HepG2 (cell line): ENCODE measurements at regions of chr13 and their contacts with region 1.

Region 1: GRCh38 chr13:46975173-46975572 is 78.3 kb upstream of the HTR2A start:
- DNase-seq: no peak
- ATAC-seq: no peak
- H3K4me3 ChIP-seq: no peak overlapping the region
- H3K27ac ChIP-seq: no peak overlapping the region
- H3K4me1 ChIP-seq: no peaks in the 10 kb centered on the region
- H3K27me3 ChIP-seq: no peaks in the 10 kb centered on the region
- CTCF ChIP-seq: no peak
- EP300 ChIP-seq: no peak
- POLR2A ChIP-seq: no peak
- RAD21 ChIP-seq: no peak

Region 2: DNA sequence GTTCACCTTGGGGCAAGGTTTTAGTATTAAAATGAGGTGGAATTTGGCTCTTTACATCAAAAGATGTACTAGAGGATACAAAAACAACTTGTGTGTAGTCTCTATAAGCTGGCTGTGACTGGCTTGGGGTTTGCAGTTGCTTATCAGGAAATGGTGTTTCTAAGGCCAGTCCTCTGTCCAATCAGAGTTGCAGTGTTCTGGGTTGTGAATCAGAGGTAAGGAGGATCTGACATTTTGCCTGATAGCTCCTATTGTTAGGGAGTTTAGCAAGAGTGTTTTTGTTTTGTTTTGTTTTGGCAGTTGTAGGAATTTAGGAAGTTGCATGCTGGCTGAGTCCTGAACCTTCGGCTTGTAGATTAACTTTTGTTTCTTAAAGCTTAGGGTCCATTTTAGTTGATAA is 158.1 kb before region 1 on chr13:
- CTCF ChIA-PET with region 1: no interaction called
- POLR2A ChIA-PET with region 1: no interaction called
- in situ Hi-C with region 1: no loop called
- intact Hi-C with region 1: no loop called
- DNase-seq: no peak
- ATAC-seq: no peak
- H3K4me3 ChIP-seq: no peak overlapping the region
- H3K27ac ChIP-seq: no peak overlapping the region
- H3K4me1 ChIP-seq: no peaks in the 10 kb centered on the region
- H3K27me3 ChIP-seq: peaks cover 0 to 2% of the 10 kb centered on the region in 2 experiments; a peak in 1 of 5 replicates
- CTCF ChIP-seq: no peak
- EP300 ChIP-seq: no peak
- POLR2A ChIP-seq: no peak
- RAD21 ChIP-seq: no peak

Region 3: GRCh38 chr13:47459512-47459911 is 484.3 kb after region 1 on chr13:
- CTCF ChIA-PET with region 1: no interaction called
- POLR2A ChIA-PET with region 1: no interaction called
- in situ Hi-C with region 1: no loop called
- intact Hi-C with region 1: loop called (anchors 2 kb)
- DNase-seq: no peak
- ATAC-seq: no peak
- H3K4me3 ChIP-seq: no peak overlapping the region
- H3K27ac ChIP-seq: no peak overlapping the region
- H3K4me1 ChIP-seq: no peaks in the 10 kb centered on the region
- H3K27me3 ChIP-seq: no peaks in the 10 kb centered on the region
- CTCF ChIP-seq: no peak
- EP300 ChIP-seq: no peak
- POLR2A ChIP-seq: no peak
- RAD21 ChIP-seq: no peak

Region 4: GRCh38 chr13:47774671-47774994 is 799.5 kb after region 1 on chr13:
- CTCF ChIA-PET with region 1: interaction called, 15 read pairs
- POLR2A ChIA-PET with region 1: no interaction called
- in situ Hi-C with region 1: loop called (anchors 10 kb)
- intact Hi-C with region 1: loop called (anchors 1 kb)
- DNase-seq: no peak
- ATAC-seq: peak; percentile 33; the same call in 2 of the 3 replicates
- H3K4me3 ChIP-seq: no peak overlapping the region
- H3K27ac ChIP-seq: no peak overlapping the region
- H3K4me1 ChIP-seq: no peaks in the 10 kb centered on the region
- H3K27me3 ChIP-seq: no peaks in the 10 kb centered on the region
- CTCF ChIP-seq: no peak
- EP300 ChIP-seq: no peak
- POLR2A ChIP-seq: no peak
- RAD21 ChIP-seq: no peak